ENCODE measurements at regions of chr17 and their contacts with region 1.

Region 1: DNA sequence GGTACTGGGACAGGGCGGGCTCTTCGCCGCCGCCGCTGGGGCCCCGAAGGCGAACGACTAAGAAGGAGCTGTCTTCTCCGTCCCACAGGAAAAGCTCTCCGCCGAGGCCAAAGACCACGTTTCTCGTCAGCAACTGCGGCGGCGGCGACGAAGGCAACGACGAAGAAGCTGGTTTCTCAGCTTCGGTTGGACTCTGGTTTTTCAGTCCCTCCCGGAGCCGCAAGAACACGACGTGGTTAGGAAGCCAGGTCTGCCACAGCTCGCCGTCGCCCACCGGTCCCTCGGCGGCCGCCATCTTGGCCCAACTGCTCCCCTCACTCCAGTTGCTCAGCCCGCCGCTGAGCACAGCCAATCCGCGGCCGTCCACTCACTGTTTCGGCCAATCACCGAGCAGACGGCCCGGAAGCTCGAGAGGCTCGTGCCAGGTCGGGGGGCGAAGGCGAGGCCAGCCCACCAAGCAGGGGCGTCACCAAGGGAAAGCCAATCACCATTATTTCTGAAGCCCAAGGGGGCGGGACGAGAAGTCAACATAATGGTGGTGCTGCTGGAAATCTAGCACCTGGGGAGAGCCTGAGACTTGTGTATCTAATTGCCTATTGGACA is at the start of gene NUP88:
- H3K4me3 ChIP-seq: peak within 1 kb of the TSS; percentile 97
- H3K27ac ChIP-seq: peak within 1 kb of the TSS; percentile 92
- H3K4me1 ChIP-seq: no peaks in the 10 kb centered on the region; the same call in 1 of the 2 replicates
- CTCF ChIP-seq: no peak

Region 2: DNA sequence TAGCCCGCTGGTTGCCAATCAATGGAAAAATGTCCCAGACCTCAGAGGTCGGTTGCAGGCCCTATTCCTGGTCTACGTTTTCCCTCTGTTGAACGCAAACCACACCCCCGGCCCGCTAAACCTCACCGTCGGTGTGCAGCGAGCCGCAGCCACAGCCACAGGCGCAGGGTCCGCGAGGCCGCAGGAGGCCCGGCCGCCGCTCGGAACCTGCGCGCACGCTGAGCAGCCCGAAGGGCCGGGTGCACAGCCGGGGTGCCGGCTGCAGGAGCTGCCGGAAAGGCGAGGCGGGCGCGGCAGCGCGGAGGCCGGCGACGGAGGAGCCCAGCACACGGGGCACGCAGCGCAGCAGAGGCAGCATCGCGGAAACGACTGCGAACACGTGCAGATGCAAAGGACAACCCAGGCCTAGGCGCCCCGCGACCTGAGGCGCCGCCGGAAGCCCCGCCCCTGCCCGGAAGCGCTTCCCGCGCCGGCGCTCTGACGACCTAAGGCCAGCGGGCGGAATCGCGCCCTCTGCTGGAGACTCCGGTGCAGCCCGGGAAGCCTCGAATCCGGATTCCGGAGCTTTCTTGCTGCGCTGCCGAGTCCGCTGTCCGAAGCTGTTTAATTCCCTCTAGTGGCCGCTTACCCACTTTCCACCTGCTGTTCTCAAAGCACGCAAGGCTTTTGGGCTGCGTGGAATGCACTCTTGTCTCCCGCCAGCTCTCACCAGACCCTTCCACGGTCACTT is 19.4 kb after region 1 on chr17 and contains the start of gene C1QBP:
- CTCF ChIA-PET with region 1: interaction called, 15 read pairs
- POLR2A ChIA-PET with region 1: interaction called, 43 read pairs
- H3K4me3 ChIP-seq: peak within 1 kb of the TSS; percentile 90
- H3K27ac ChIP-seq: peak within 1 kb of the TSS; percentile 94
- H3K4me1 ChIP-seq: no peaks in the 10 kb centered on the region
- CTCF ChIP-seq: peak; percentile 98

Measured in HEK293 (cell line).